SK-N-SH (cell line): ENCODE measurements at regions of chr4 and their contacts with region 1.

Region 1: GRCh38 chr4:20395160-20395773 is 143.6 kb downstream of the SLIT2 start:
- DNase-seq: no peak
- H3K4me3 ChIP-seq: no peak overlapping the region
- H3K27ac ChIP-seq: no peak overlapping the region
- H3K4me1 ChIP-seq: peaks cover 0 to 16% of the 10 kb centered on the region in 2 experiments; a peak in 2 of 4 replicates
- H3K27me3 ChIP-seq: no peaks in the 10 kb centered on the region
- CTCF ChIP-seq: peak; percentile 70
- EP300 ChIP-seq: no peak
- RAD21 ChIP-seq: peak; percentile 36

Region 2: DNA sequence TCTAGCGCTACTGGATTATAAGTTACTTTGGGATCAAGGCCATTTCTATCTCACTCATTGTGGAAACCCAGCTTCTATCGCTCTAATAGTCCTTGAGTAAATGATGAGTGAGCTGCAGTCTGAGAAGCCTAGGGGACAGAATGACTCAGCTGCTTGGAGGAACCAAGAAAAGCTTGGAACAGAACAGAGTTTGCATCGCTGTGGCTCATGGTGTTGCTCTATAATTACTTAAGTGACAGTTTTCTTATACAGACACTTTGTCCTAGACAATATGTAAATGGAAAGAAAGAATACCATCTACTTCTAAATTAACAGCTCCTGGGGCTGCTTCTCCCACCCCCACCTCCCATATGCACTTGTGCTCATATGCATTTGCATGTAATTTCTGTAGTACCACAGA is 13.3 kb after region 1 on chr4:
- CTCF ChIA-PET with region 1: interaction called, 16 read pairs
- POLR2A ChIA-PET with region 1: no interaction called
- DNase-seq: no peak
- H3K4me3 ChIP-seq: no peak overlapping the region
- H3K27ac ChIP-seq: peak overlapping the region in 1 of 2 experiments; percentile 15; a peak in 1 of 4 replicates
- H3K4me1 ChIP-seq: 0 out of 4 replicates have a peak, but pooled peaks cover 0 to 7% of the 10 kb centered on the region in 2 experiments
- H3K27me3 ChIP-seq: no peaks in the 10 kb centered on the region
- CTCF ChIP-seq: no peak
- EP300 ChIP-seq: no peak
- RAD21 ChIP-seq: no peak